Panc1 (cell line): ENCODE measurements at regions of chr11 and their contacts with region 1.

Region 1: GRCh38 chr11:2196970-2197770 is 25.6 kb upstream of the TH start:
- DNase-seq: peak; percentile 24
- ATAC-seq: peak; percentile 90
- H3K4me3 ChIP-seq: no peak overlapping the region
- H3K27ac ChIP-seq: no peak overlapping the region
- H3K4me1 ChIP-seq: peaks cover 4% of the 10 kb centered on the region; the same call in 1 of the 2 replicates
- H3K27me3 ChIP-seq: peaks cover 4% of the 10 kb centered on the region; the same call in 1 of the 2 replicates
- CTCF ChIP-seq: peak; percentile 100

Region 2: DNA sequence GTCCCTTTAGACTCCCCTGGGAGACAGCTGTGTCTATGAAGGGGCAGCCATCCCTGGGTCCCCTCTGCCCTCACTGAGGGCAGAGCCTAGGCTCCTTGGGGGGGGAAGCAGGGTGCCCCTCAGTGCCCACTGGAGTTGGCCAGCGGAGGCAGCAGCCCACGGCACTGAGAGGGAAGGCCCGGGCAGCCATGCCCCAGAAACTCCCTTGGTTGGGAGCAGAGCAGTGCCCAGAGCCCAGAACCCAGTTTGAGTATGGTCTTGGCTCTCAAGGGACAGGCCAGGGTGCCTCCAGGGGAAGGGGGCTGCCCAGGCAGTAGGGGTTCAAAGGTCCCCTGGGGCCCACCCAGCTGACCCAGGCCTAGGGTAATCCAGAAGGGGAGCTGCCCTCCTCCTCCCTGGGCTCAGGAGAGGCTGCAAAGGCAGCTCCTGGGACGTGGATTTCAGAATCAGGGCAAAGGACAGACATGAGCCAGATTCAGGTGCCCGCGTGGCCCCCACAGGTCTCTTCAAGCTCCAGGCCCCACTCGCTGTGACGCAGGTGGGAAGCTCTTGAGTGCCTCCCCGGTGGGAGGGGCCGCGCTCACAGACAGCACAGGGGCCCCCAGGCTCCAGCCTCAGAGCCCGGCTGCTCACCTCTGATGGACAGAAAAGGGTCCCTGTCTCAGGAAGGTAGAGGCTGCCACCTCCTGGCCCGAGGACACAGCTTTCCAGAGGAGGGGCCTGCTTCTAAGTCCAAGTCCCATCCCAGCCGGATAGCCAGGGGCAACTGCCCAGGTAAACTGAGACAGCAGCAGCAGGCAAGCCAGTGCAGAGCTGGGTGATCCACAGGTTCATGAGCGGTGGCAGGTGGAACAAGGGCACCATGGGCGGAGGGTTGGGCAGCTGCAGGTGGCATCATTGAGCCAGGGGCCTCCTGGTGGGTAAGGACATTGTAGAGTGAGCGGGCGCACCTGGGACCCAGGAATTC is 101.9 kb after region 1 on chr11:
- CTCF ChIA-PET with region 1: interaction called, 9 read pairs
- POLR2A ChIA-PET with region 1: no interaction called
- in situ Hi-C with region 1: no loop called
- intact Hi-C with region 1: loop called (anchors 1 kb)
- DNase-seq: no peak
- ATAC-seq: peak; percentile 82
- H3K4me3 ChIP-seq: no peak overlapping the region
- H3K27ac ChIP-seq: no peak overlapping the region
- H3K4me1 ChIP-seq: no peaks in the 10 kb centered on the region
- H3K27me3 ChIP-seq: peaks cover 5% of the 10 kb centered on the region; the same call in 1 of the 2 replicates
- CTCF ChIP-seq: peak; percentile 92